ENCODE measurements at regions of chr19 and their contacts with region 1.

Region 1: GRCh38 chr19:49272184-49272583 is 52.8 kb downstream of the SLC6A16 start:
- DNase-seq: peak; percentile 50
- ATAC-seq: peak; percentile 82
- H3K4me3 ChIP-seq: no peak overlapping the region; a peak in 1 of 4 replicates
- H3K27ac ChIP-seq: peak overlapping the region; percentile 83
- H3K4me1 ChIP-seq: peaks cover 18 to 21% of the 10 kb centered on the region in 2 experiments
- H3K27me3 ChIP-seq: no peaks in the 10 kb centered on the region
- CTCF ChIP-seq: no peak
- POLR2A ChIP-seq: no peak
- RAD21 ChIP-seq: no peak

Region 2: GRCh38 chr19:49327878-49328544 is 55.8 kb after region 1 on chr19:
- CTCF ChIA-PET with region 1: no interaction called
- POLR2A ChIA-PET with region 1: no interaction called
- RAD21 ChIA-PET with region 1: no interaction called
- intact Hi-C with region 1: loop called (anchors 5 kb)
- DNase-seq: peak; percentile 19
- ATAC-seq: peak; percentile 72
- H3K4me3 ChIP-seq: no peak overlapping the region
- H3K27ac ChIP-seq: no peak overlapping the region
- H3K4me1 ChIP-seq: no peaks in the 10 kb centered on the region
- H3K27me3 ChIP-seq: no peaks in the 10 kb centered on the region
- CTCF ChIP-seq: peak; percentile 37 to 82 (median 76); a peak in 5 of 6 replicates
- POLR2A ChIP-seq: no peak
- RAD21 ChIP-seq: peak; percentile 41

Measured in HCT116 (cell line).